ENCODE measurements at regions of chr5 and their contacts with region 1.

Region 1: GRCh38 chr5:100890461-100891008 is 12.5 kb downstream of the ST8SIA4 start:
- DNase-seq: no peak
- H3K4me3 Mint-ChIP-seq: peak overlapping the region; percentile 81
- H3K27ac Mint-ChIP-seq: peak overlapping the region; percentile 94
- H3K4me1 Mint-ChIP-seq: peaks cover 85% of the 10 kb centered on the region
- H3K27me3 Mint-ChIP-seq: no peaks in the 10 kb centered on the region

Region 2: GRCh38 chr5:100827481-100827889 is 63.0 kb before region 1 on chr5:
- intact Hi-C with region 1: no loop called
- DNase-seq: no peak
- H3K4me3 Mint-ChIP-seq: no peak overlapping the region
- H3K27ac Mint-ChIP-seq: peak overlapping the region; percentile 31
- H3K4me1 Mint-ChIP-seq: peaks cover 36% of the 10 kb centered on the region
- H3K27me3 Mint-ChIP-seq: no peaks in the 10 kb centered on the region

Region 3: DNA sequence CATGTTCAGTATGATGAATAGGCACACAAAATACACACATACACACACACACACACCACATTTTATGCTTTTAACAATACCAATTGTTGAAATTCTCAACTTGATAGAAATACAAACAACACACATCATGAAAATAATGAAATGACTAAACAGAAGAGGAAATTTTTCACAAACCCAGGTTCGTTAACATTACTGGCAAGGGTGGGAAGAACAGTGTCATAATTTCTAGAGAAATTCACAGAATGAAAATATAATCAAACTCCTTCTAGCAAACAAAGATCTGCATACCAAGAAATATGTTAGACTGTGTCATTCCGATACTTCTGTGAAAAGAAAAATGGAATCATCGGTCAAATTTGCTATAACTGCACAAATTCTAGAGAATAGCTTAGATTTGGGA is 29.4 kb before region 1 on chr5:
- intact Hi-C with region 1: loop called (anchors 1 kb)
- DNase-seq: no peak
- H3K4me3 Mint-ChIP-seq: peak overlapping the region; percentile 77
- H3K27ac Mint-ChIP-seq: peak overlapping the region; percentile 97
- H3K4me1 Mint-ChIP-seq: peaks cover 64% of the 10 kb centered on the region
- H3K27me3 Mint-ChIP-seq: no peaks in the 10 kb centered on the region

Region 4: GRCh38 chr5:100872408-100873190 is 17.9 kb before region 1 on chr5:
- intact Hi-C with region 1: loop called (anchors 1 kb)
- DNase-seq: no peak
- H3K4me3 Mint-ChIP-seq: no peak overlapping the region
- H3K27ac Mint-ChIP-seq: peak overlapping the region; percentile 56
- H3K4me1 Mint-ChIP-seq: peaks cover 48% of the 10 kb centered on the region
- H3K27me3 Mint-ChIP-seq: no peaks in the 10 kb centered on the region

Measured in activated T-helper 1 cell treated with anti-CD3 and anti-CD28 coated beads, Interleukin-12 subunit alpha, Interleukin-12 subunit beta, Interleukin-2, Interleukin-4 antibody, amounts not matched to agents 30 ng/mL and 10 ng/mL and 1 ng/mL, durations not matched to agents 14 hours and 24 hours and 36 hours (primary cell).